Cardiac septum (tissue), 1 donor: ENCODE measurements at regions of chr4 and their contacts with region 1.

Region 1: GRCh38 chr4:8158710-8159536 is at the start of gene ABLIM2:
- DNase-seq: peak; percentile 98
- total RNA-seq, gene ABLIM2: 22.6 TPM

Region 2: DNA sequence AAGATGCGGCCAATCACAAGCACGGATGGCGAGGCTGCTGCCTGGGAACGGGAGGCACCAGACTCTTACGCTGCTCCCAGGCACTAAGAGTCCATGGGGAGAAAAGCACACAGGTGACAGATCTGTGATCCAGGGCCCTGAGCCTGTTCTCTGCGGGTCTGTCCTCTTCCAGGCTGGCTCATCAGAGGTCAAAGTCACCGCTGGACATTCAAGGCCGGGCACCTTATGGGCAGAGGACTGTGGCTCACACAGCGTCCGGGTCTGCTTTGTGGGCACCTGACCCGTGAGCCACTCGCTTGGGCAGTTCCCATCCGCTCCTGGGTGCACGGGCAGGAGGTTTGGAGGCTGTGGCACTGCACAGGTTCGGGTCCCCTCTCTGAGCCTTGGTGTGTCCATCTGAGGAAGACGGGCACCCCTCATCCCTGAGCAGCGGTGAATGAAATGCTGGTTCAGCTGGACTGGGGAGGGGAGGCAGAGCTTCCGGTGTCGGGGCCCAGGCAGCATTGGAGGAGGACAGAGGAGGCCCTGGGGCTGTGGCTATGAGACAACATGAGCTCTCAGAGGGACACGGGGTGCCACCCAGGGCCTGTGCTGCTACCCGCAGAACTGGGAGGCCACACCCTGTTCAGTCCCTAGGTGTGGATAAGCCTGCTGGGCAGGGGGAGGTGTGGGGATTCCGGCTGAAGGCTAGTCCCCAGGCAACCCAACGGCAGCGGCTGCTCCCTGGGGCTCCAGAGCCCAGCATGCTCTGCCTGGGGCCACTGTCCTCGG is 158.0 kb before region 1 on chr4:
- intact Hi-C with region 1: no loop called
- DNase-seq: no peak

Region 3: GRCh38 chr4:8050555-8051206 is 108.2 kb before region 1 on chr4:
- intact Hi-C with region 1: loop called (anchors 5 kb)
- DNase-seq: peak; percentile 90